ENCODE measurements at regions of chr3 and their contacts with region 1.

Region 1: GRCh38 chr3:122055215-122055614 is at the start of gene CD86:
- DNase-seq: no peak
- ATAC-seq: peak; percentile 44
- H3K4me3 Mint-ChIP-seq: no peak within 1 kb of the TSS
- H3K27ac Mint-ChIP-seq: no peak within 1 kb of the TSS
- H3K4me1 Mint-ChIP-seq: no peaks in the 10 kb centered on the region
- H3K27me3 Mint-ChIP-seq: peaks cover 24% of the 10 kb centered on the region
- total RNA-seq, gene CD86: 0.09 to 0.25 TPM

Region 2: DNA sequence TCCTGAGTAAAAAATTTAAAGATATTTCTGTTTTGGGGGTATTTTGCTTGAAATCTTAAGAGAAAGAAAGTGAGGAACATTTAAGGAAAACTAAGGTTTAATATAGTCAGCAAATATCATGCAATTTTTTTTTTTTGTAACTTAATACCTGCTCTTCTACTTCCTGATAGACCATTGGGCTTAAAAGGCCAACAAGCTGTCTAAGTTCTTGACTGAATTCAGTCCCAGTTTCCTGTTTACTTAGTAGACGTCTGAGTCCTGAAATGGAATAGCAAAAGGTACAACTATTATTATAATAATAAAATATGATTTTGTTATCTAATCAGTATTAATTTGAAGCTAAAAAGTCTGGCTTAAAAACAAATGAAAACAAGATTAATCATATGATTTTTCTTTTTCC is 258.2 kb before region 1 on chr3:
- CTCF ChIA-PET with region 1: no interaction called
- POLR2A ChIA-PET with region 1: no interaction called
- intact Hi-C with region 1: loop called in 1 of 2 experiments (anchors 5 kb)
- DNase-seq: no peak
- ATAC-seq: no peak
- H3K4me3 Mint-ChIP-seq: no peak overlapping the region
- H3K27ac Mint-ChIP-seq: no peak overlapping the region
- H3K4me1 Mint-ChIP-seq: peaks cover 4% of the 10 kb centered on the region
- H3K27me3 Mint-ChIP-seq: no peaks in the 10 kb centered on the region

Region 3: DNA sequence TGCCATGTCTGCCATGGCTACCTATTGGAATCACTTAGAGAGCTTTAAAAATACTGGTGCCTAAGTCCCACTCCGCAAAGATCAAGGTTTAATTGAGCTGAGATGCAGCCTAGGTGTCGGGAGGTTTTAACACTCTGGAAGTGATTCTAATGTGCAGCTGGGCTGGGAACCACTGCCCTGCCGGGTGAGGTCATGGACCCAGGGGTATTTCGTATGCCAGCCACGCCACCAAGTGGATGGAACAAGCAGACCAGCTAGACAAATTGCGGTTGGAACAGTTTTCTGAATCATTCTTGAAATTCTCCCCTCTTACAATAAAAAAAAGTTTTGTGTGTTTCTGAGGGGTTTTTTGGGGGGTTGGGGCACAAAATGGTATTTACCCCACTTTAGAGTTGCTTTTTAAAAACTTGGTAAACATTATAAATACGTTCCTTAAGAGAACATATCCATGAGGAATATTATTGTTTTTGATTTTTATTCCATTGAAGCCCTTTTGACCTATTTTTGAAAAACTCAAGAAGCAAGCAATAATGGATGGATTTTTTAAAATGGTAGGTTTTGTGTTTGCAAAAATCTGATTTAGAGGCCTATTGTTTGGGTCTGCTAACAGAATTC is 203.6 kb after region 1 on chr3:
- CTCF ChIA-PET with region 1: no interaction called
- POLR2A ChIA-PET with region 1: no interaction called
- intact Hi-C with region 1: no loop called
- DNase-seq: peak; percentile 83
- ATAC-seq: peak; percentile 92
- H3K4me3 Mint-ChIP-seq: no peak overlapping the region
- H3K27ac Mint-ChIP-seq: no peak overlapping the region
- H3K4me1 Mint-ChIP-seq: peaks cover 18% of the 10 kb centered on the region
- H3K27me3 Mint-ChIP-seq: no peaks in the 10 kb centered on the region

Region 4: GRCh38 chr3:122519693-122520092 is 464.5 kb after region 1 on chr3:
- CTCF ChIA-PET with region 1: no interaction called
- POLR2A ChIA-PET with region 1: no interaction called
- intact Hi-C with region 1: no loop called
- DNase-seq: no peak
- ATAC-seq: no peak
- H3K4me3 Mint-ChIP-seq: no peak overlapping the region
- H3K27ac Mint-ChIP-seq: no peak overlapping the region
- H3K4me1 Mint-ChIP-seq: peaks cover 9% of the 10 kb centered on the region
- H3K27me3 Mint-ChIP-seq: no peaks in the 10 kb centered on the region

Measured in activated CD4-positive, alpha-beta T cell treated with anti-CD3 and anti-CD28 coated beads for 36 hours (primary cell).